IMR-90 (cell line): ENCODE measurements at regions of chr4 and their contacts with region 1.

Region 1: GRCh38 chr4:46648088-46648744 is 258.3 kb upstream of the GABRA2 start:
- DNase-seq: peak; percentile 64
- ATAC-seq: peak; percentile 97
- H3K4me3 ChIP-seq: no peak overlapping the region
- H3K27ac ChIP-seq: no peak overlapping the region
- H3K4me1 ChIP-seq: no peaks in the 10 kb centered on the region
- H3K27me3 ChIP-seq: no peaks in the 10 kb centered on the region
- CTCF ChIP-seq: peak; percentile 55
- POLR2A ChIP-seq: no peak
- RAD21 ChIP-seq: peak; percentile 77

Region 2: GRCh38 chr4:44760142-44760898 is 1887.9 kb before region 1 on chr4:
- CTCF ChIA-PET with region 1: interaction called, 3 read pairs
- POLR2A ChIA-PET with region 1: no interaction called
- dilution Hi-C with region 1: no loop called
- in situ Hi-C with region 1: no loop called
- intact Hi-C with region 1: loop called (anchors 1 kb)
- DNase-seq: peak; percentile 20
- ATAC-seq: peak; percentile 62
- H3K4me3 ChIP-seq: no peak overlapping the region
- H3K27ac ChIP-seq: no peak overlapping the region
- H3K4me1 ChIP-seq: no peaks in the 10 kb centered on the region
- H3K27me3 ChIP-seq: no peaks in the 10 kb centered on the region
- CTCF ChIP-seq: peak; percentile 54
- POLR2A ChIP-seq: no peak
- RAD21 ChIP-seq: peak; percentile 20; the same call in 1 of the 2 replicates